GM18951 (cell line): ENCODE measurements at regions of chr11 and their contacts with region 1.

Region 1: DNA sequence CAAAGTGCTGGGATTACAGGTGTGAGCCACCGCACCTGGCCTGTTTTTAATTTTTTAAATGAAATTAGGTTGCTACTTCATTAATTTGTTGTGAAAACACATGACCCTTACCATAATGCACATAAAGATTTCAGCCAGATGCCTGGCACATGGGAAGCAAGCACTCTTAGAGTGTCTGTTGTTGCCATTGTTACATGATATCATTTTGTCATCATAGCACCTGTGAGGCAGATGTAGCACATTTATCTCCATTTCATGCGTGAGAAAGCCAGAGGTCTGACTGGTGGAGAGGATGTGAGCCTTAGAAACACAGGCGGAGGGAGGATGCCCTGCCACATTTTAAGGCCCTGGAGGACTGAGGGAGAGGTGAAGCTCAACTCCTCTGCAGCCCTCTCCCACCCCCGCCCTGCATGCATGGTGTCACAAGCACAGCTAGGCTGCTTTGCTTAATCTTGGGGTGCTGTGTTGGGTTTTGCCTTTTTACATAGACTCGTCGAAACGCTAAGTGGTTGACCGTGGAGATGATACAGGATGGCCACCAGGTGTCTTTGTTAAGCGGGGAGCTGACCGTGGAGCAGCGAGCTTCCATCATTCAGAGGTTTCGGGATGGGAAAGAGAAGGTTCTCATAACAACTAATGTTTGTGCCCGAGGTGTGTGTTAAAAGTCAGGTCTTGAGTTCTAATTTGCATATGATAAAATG is 14.0 kb downstream of the DDX25 start:
- POLR2A ChIP-seq: no peak

Region 2: GRCh38 chr11:125553357-125553756 is 364.9 kb before region 1 on chr11:
- in situ Hi-C with region 1: no loop called
- POLR2A ChIP-seq: no peak

Region 3: GRCh38 chr11:126102436-126102981 is 184.2 kb after region 1 on chr11:
- in situ Hi-C with region 1: no loop called
- POLR2A ChIP-seq: no peak

Region 4: DNA sequence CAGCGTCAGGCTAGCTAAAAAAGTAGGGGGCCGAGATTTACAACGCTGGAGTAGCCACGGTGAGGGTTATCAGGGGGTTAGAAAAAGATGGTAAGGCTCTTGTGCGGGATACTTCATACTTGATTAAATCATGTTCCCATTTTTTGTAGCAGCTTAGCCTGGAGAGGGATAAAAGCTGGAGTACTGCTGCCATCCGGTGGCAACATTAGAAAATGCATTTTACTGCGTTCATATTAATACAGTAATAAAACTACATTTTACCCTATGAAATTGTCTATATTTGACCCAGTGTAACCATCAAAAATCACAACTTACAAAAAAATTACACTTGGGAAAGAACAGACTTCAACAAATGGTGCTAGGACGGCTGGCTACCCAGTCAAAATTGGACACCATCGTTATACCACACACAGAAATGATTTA is 275.8 kb after region 1 on chr11:
- in situ Hi-C with region 1: loop called (anchors 5 kb)
- POLR2A ChIP-seq: no peak